Calu3 (cell line): ENCODE measurements at regions of chr5 and their contacts with region 1.

Region 1: GRCh38 chr5:159749146-159749545 is 167.1 kb upstream of the ADRA1B start:
- DNase-seq: no peak
- H3K4me3 Mint-ChIP-seq: no peak overlapping the region
- H3K27ac Mint-ChIP-seq: no peak overlapping the region
- H3K4me1 Mint-ChIP-seq: peaks cover 12% of the 10 kb centered on the region
- H3K27me3 Mint-ChIP-seq: no peaks in the 10 kb centered on the region
- CTCF ChIP-seq: no peak

Region 2: GRCh38 chr5:159705948-159706347 is 43.2 kb before region 1 on chr5:
- CTCF ChIA-PET with region 1: interaction called, 10 read pairs
- intact Hi-C with region 1: no loop called
- DNase-seq: no peak
- H3K4me3 Mint-ChIP-seq: no peak overlapping the region
- H3K27ac Mint-ChIP-seq: no peak overlapping the region
- H3K4me1 Mint-ChIP-seq: no peaks in the 10 kb centered on the region
- H3K27me3 Mint-ChIP-seq: no peaks in the 10 kb centered on the region
- CTCF ChIP-seq: no peak